ENCODE measurements at regions of chr2 and their contacts with region 1.

Region 1: GRCh38 chr2:33502025-33502424 is 25.6 kb downstream of the RASGRP3 start:
- DNase-seq: no peak
- ATAC-seq: no peak
- H3K4me3 Mint-ChIP-seq: no peak overlapping the region
- H3K27ac Mint-ChIP-seq: no peak overlapping the region
- H3K4me1 Mint-ChIP-seq: peaks cover 10% of the 10 kb centered on the region
- H3K27me3 Mint-ChIP-seq: peaks cover 17% of the 10 kb centered on the region
- CTCF ChIP-seq: no peak

Region 2: GRCh38 chr2:33215299-33215698 is 286.7 kb before region 1 on chr2:
- CTCF ChIA-PET with region 1: no interaction called
- POLR2A ChIA-PET with region 1: no interaction called
- intact Hi-C with region 1: no loop called
- DNase-seq: no peak
- ATAC-seq: no peak
- H3K4me3 Mint-ChIP-seq: no peak overlapping the region
- H3K27ac Mint-ChIP-seq: no peak overlapping the region
- H3K4me1 Mint-ChIP-seq: peaks cover 8% of the 10 kb centered on the region
- H3K27me3 Mint-ChIP-seq: peaks cover 4% of the 10 kb centered on the region
- CTCF ChIP-seq: no peak

Region 3: DNA sequence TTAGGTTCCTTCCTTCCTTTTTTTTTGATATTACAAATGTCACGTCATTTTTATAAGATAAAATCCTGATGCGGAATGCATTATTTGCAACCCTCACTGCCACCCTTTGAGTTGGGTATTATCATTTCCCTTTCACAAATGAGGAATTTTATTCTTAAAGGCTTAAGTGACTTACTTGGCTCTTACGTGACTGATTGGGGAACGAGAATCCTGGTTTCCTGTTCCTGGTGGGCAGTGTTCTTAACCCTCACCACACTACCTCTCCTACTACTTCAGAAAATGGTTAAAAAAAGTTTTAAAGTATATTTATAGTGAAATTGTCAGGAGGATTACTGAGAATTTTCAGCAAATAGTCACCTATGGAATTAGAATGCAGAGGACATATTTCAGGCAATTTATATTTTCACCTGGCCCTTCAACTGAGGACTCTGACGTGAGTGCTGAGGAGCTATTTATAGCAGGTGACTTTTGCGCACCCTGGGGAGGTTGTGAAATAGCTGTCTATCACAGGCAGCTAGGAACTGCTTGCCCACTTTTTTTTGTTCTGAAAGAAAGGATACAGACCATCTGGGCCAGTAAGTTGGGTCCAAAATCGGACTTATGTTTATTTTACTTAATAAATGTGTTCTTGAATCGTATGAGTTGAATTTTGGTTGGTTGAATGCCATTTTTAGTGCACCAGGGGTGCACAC is 44.3 kb before region 1 on chr2:
- CTCF ChIA-PET with region 1: no interaction called
- POLR2A ChIA-PET with region 1: no interaction called
- intact Hi-C with region 1: loop called (anchors 2 kb)
- DNase-seq: no peak
- ATAC-seq: no peak
- H3K4me3 Mint-ChIP-seq: no peak overlapping the region
- H3K27ac Mint-ChIP-seq: no peak overlapping the region
- H3K4me1 Mint-ChIP-seq: no peaks in the 10 kb centered on the region
- H3K27me3 Mint-ChIP-seq: peaks cover 3% of the 10 kb centered on the region
- CTCF ChIP-seq: no peak

Measured in activated CD8-positive, alpha-beta T cell treated with anti-CD3 and anti-CD28 coated beads for 36 hours (primary cell).